ENCODE measurements at regions of chr19 and their contacts with region 1.

Region 1: GRCh38 chr19:13952154-13953035 is at the start of gene DCAF15:
- DNase-seq: peak; percentile 99 to 100
- ATAC-seq: peak; percentile 97 to 99 (median 98)
- H3K4me3 ChIP-seq: peak within 1 kb of the TSS; percentile 48 to 84 (median 76)
- H3K27ac ChIP-seq: peak within 1 kb of the TSS; percentile 57 to 90 (median 84)
- H3K4me1 ChIP-seq: peaks cover 8 to 29% (median 15%) of the 10 kb centered on the region in 9 donors
- H3K27me3 ChIP-seq: no peaks in the 10 kb centered on the region
- CTCF ChIP-seq: no peak
- total RNA-seq, gene DCAF15: 15.5 to 21.2 (median 17.8) TPM

Region 2: GRCh38 chr19:13905938-13906904 is 46.2 kb before region 1 on chr19 and contains the starts of genes BRME1 and CC2D1A:
- intact Hi-C with region 1: loop called in 2 of 10 experiments (anchors 1 to 5 kb)
- DNase-seq: peak; percentile 93 to 95
- ATAC-seq: peak; percentile 98 to 100 (median 99)
- H3K4me3 ChIP-seq: peak within 1 kb of the TSS; percentile 77 to 97 (median 85)
- H3K27ac ChIP-seq: peak within 1 kb of the TSS in 9 of 10 donors; percentile 33 to 87 (median 69)
- H3K4me1 ChIP-seq: peaks cover 0 to 24% (median 16%) of the 10 kb centered on the region in 9 donors
- H3K27me3 ChIP-seq: no peaks in the 10 kb centered on the region
- CTCF ChIP-seq: peak in 2 of 9 donors; percentile 12 to 23
- total RNA-seq, gene BRME1: 0.19 to 0.88 (median 0.63) TPM in 8 of 10 donors, not detected in the others
- total RNA-seq, gene CC2D1A: 13.2 to 30.2 (median 19.0) TPM

Region 3: DNA sequence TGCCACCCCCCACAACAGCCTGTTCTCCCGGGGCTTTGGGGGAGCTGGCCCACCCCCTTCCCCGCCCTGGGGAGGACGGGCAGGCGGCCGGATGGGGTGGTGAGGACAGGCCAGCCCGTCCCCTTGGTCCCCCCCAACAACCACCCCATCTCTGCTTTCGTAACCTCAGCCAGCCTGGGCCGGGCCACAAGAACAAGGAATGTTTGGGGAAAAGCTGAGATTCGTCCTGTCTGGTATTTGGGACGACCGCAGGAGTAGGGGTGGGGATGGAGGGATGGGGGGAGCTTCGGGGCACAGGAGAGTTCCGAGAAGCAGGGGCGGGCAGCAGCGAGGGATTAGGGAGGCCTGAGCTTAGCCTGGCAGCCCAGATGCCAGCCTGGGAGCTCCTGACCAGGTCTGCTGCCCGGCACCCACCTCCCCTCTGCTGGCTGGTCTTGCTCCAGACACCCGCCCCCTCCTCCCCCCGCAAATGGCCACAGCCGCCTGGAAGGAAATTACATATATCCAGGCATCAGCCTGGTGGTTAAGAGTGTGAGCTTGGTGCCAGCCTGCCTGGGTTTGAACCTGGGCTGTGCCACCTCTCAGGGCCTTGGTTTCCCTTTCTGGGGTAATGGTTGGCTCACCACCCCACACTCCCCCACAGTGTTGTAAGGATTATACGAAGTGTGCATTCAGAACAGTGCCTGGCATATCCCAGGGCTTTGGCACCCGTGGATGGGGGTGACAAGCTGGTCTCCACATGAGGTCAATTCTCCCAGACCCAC is 13.9 kb before region 1 on chr19 and contains the start of gene PODNL1:
- intact Hi-C with region 1: no loop called
- DNase-seq: no peak
- ATAC-seq: peak in 7 of 8 donors; percentile 16 to 75 (median 61)
- H3K4me3 ChIP-seq: peak within 1 kb of the TSS in 6 of 10 donors; percentile 21 to 46 (median 26)
- H3K27ac ChIP-seq: no peak within 1 kb of the TSS
- H3K4me1 ChIP-seq: peaks cover 0 to 5% (median 0%) of the 10 kb centered on the region in 9 donors
- H3K27me3 ChIP-seq: peaks cover 0 to 32% (median 19%) of the 10 kb centered on the region in 7 donors
- CTCF ChIP-seq: no peak
- total RNA-seq, gene PODNL1: 0.76 to 6.2 (median 1.8) TPM

Region 4: GRCh38 chr19:14006243-14006765 is 53.9 kb after region 1 on chr19 and contains the start of gene RFX1:
- intact Hi-C with region 1: loop called in 4 of 10 experiments (anchors 1 to 10 kb)
- DNase-seq: peak; percentile 100
- ATAC-seq: peak; percentile 86 to 93 (median 90)
- H3K4me3 ChIP-seq: peak within 1 kb of the TSS; percentile 54 to 94 (median 76)
- H3K27ac ChIP-seq: peak within 1 kb of the TSS; percentile 95 to 100 (median 99)
- H3K4me1 ChIP-seq: peaks cover 11 to 46% (median 35%) of the 10 kb centered on the region in 9 donors
- H3K27me3 ChIP-seq: no peaks in the 10 kb centered on the region
- CTCF ChIP-seq: no peak
- total RNA-seq, gene RFX1: 10.4 to 15.8 (median 12.0) TPM

Region 5: DNA sequence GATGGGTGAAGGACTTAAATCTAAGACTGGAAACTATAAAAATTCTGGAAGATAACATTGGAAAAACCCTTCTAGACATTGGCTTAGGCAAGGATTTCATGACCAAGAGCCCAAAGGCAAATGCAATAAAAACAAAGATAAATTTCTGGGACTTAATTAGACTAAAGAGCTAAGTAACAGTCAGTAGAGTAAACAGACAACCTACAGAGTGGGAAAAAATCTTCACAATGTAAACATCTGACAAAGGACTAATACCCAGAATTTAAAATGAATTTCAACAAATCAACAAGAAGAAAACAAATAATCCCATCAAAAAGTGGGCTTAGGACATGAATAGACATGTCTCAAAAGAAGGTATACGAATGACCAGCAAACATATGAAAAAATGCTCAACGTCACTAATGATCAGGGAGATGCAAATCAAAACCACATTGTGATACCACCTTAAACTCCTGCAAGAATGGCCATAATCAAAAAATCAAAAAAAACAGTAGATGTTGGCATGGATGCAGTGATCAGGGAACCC is 60.1 kb after region 1 on chr19:
- intact Hi-C with region 1: loop called in 3 of 10 experiments (anchors 5 to 10 kb)
- DNase-seq: no peak
- ATAC-seq: no peak
- H3K4me3 ChIP-seq: no peak overlapping the region
- H3K27ac ChIP-seq: no peak overlapping the region
- H3K4me1 ChIP-seq: no peaks in the 10 kb centered on the region
- H3K27me3 ChIP-seq: no peaks in the 10 kb centered on the region
- CTCF ChIP-seq: no peak

Region 6: DNA sequence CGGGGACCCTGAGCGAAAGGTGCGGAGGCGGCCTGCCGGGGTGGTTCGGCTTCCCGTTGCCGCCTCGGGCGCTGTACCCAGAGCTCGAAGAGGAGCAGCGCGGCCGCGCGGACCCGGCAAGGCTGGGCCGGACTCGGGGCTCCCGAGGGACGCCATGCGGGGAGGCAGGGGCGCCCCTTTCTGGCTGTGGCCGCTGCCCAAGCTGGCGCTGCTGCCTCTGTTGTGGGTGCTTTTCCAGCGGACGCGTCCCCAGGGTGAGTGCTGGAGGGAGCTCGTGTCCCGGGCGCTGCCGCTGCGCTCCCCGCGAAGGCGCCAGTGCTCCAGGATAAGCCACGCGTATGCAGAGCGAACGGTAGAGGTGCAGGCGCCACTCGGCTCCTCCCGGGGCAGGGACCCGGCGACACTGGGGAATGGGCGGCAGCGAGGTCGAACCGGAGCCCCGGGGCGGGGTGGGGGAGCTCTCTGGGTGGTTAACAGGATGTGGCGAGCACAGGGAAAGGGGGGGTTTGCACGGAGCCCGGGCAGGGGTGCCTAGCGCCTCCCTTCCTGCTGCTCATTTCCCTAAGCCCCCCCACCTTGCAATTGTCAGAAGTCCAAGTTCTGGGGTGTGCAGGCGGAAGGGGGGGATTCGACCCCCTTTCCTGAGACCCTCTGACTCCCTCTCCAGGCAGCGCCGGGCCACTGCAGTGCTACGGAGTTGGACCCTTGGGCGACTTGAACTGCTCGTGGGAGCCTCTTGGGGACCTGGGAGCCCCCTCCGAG is 79.5 kb after region 1 on chr19 and contains the start of gene IL27RA:
- intact Hi-C with region 1: loop called in 1 of 10 experiments (anchors 10 kb)
- DNase-seq: peak; percentile 72 to 75
- ATAC-seq: peak; percentile 80 to 90 (median 86)
- H3K4me3 ChIP-seq: peak within 1 kb of the TSS; percentile 61 to 80 (median 74)
- H3K27ac ChIP-seq: peak within 1 kb of the TSS; percentile 79 to 96 (median 92)
- H3K4me1 ChIP-seq: peaks cover 0 to 33% (median 18%) of the 10 kb centered on the region in 9 donors
- H3K27me3 ChIP-seq: peaks cover 0 to 5% (median 0%) of the 10 kb centered on the region in 7 donors
- CTCF ChIP-seq: peak; percentile 55 to 78 (median 64)
- total RNA-seq, gene IL27RA: 2.4 to 7.6 (median 3.4) TPM

Region 7: DNA sequence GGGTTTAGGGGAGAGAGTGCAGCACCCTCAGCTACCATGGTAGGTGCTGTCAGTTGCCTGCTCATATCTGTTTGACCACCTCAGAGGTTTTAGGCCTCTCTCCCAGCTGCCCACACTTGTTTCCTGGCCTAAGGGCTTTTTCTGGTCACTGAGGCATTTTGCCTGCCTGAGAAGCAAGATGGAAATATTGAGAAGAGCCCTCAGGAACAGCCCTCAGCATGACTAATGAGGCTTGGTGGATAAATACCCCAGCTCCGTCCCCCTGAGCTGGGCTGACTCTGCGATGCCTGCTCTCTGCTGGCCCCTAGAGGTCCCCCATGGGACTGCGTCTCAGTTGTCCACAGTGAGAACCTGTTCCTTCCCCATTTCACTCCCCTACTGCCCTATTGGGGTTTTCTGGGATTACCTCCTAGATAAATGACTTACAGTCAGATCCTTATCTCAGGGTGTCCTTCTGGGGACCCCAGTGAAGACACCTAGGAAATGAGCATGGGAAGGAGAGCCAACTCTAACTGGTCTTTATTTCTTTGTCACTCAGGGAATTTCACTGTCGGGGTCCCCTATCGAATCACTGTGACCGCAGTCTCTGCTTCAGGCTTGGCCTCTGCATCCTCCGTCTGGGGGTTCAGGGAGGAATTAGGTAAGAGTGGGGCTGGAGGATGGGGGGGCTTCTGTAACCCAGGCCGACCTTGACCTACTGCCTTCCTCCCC is 96.2 kb after region 1 on chr19:
- intact Hi-C with region 1: loop called in 1 of 10 experiments (anchors 10 kb)
- DNase-seq: peak; percentile 42 to 67
- ATAC-seq: peak in 6 of 8 donors; percentile 41 to 71 (median 60)
- H3K4me3 ChIP-seq: no peak overlapping the region
- H3K27ac ChIP-seq: no peak overlapping the region
- H3K4me1 ChIP-seq: no peaks in the 10 kb centered on the region
- H3K27me3 ChIP-seq: no peaks in the 10 kb centered on the region
- CTCF ChIP-seq: peak; percentile 64 to 95 (median 81)